ENCODE measurements at regions of chr18 and their contacts with region 1.

Region 1: DNA sequence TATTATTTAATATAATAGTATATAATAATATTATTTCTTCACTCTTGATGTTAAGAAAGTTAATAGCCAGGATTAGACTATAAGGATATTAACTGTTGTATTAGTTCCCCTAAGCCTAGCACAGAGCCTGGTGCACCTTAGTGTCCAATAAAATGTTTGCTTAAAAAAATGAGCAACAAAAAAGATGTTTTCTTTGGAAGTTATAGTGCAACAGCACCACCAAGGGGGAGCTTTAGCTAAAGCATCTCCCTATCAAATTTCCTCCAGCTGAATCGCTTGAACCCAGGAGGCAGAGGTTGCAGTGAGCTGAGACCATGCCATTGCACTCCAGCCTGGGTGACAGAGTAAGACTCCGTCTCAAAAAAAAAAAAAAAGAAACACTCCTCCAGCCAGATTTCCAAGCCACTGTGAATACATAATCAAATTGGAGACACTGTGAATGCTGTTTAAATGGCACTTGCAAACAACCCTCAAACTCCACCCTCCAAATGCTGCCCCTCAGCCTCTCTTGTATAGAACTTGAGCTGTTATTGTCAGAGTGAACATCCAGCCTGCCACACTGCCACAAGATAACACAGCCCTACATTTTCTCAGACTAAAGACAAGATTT is 221.9 kb downstream of the DYM start:
- DNase-seq: peak; percentile 53
- H3K4me3 ChIP-seq: no peak overlapping the region
- H3K27ac ChIP-seq: no peak overlapping the region
- H3K4me1 ChIP-seq: peaks cover 3% of the 10 kb centered on the region
- H3K27me3 ChIP-seq: no peaks in the 10 kb centered on the region
- CTCF ChIP-seq: peak; percentile 42 to 48
- POLR2A ChIP-seq: no peak

Region 2: DNA sequence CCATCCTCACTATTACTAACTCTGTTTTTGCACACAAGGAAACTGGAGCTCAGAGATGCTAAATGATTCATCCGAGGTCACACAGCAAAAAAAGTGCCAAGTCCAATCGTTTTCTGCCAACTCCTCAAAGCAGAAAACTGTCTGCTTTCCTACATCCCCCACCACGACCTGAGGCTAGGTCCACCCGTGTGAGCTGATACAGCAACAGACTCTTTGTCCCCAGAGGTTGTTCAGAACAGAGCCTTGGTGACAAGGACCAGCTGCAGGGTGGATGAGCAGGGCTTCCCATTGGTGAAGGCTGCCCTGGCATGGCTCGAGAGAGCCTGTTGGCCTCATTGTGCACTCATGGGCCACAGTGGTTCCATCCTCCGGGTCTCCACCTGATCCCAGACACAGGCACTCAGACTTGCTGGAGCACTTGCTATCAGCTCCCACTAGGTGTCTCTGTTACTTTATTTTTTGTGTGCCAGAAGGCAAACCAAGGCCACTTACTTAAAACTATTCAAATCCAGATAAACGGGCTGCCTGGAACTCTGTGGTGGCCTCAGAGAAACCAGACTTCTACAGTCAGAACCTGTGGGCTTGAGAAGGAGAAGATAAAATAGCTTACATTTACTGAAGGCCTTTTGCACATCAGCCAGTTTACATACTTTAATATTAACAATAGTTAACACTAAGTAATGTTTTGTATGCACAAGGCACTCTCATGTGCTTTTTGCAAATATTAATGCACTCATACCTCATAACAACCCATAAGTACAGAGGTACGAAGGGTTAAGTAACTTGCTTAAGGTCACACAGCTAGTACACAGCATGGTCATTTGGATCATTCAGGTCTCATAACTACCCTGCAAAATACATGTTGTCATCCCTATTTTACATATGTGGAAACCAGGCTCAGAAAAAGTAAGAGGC is 762.6 kb before region 1 on chr18:
- CTCF ChIA-PET with region 1: interaction called, 11 read pairs
- POLR2A ChIA-PET with region 1: no interaction called
- dilution Hi-C with region 1: no loop called
- intact Hi-C with region 1: loop called (anchors 10 kb)
- DNase-seq: peak; percentile 78
- H3K4me3 ChIP-seq: no peak overlapping the region
- H3K27ac ChIP-seq: no peak overlapping the region
- H3K4me1 ChIP-seq: peaks cover 2% of the 10 kb centered on the region
- H3K27me3 ChIP-seq: peaks cover 6 to 11% of the 10 kb centered on the region in 2 experiments
- CTCF ChIP-seq: peak; percentile 80 to 86
- POLR2A ChIP-seq: no peak

Region 3: DNA sequence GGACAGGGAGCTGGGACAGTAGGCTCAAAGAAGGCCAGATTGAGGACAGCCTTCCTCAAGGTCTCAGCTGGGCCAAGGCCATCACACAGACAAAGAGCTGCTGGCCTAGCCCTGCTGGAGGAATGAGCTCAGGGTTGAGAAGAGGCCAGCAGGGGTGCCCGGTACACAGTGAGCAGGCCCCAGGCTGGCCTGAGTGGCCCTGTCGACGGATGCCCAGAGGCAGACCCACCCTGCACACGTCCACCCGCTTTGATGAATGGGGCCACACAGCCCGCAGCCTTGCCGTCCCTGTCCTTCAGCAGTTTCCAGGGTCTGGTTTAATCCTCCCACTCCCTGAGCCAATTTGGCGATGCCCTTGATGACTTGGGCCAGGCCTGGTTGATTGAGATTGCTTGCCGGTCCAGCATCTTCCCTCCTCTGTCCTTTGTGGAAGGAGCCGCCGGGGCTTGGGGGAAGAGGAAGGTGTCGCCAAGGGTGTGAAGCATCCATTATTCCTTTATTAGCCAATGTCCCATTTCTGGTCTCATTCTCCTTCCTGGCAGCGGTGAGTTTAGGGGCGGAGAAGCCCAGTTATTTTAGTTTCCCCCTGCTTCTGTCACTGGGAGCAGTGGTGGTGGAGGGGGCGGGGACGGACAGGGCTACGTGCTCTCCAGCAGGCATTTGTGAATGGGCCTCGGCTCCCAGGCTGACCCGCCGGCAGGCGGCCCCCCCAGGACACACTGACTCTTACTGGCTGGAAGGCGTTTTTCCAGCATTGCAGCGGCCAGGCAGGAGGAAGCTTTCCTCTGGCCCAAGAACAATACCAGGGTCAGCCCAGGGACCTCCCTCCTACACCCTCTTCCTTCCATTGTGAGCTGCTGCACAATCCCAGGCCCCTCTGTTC is 558.0 kb before region 1 on chr18:
- CTCF ChIA-PET with region 1: interaction called, 56 read pairs
- POLR2A ChIA-PET with region 1: interaction called, 3 read pairs
- dilution Hi-C with region 1: no loop called
- intact Hi-C with region 1: loop called (anchors 1 kb)
- DNase-seq: peak; percentile 96
- H3K4me3 ChIP-seq: no peak overlapping the region
- H3K27ac ChIP-seq: peak overlapping the region; percentile 42
- H3K4me1 ChIP-seq: peaks cover 17% of the 10 kb centered on the region
- H3K27me3 ChIP-seq: no peaks in the 10 kb centered on the region
- CTCF ChIP-seq: peak; percentile 26 to 67
- POLR2A ChIP-seq: no peak

Region 4: GRCh38 chr18:49021433-49022129 is 217.0 kb before region 1 on chr18:
- CTCF ChIA-PET with region 1: interaction called, 16 read pairs
- POLR2A ChIA-PET with region 1: no interaction called
- dilution Hi-C with region 1: no loop called
- intact Hi-C with region 1: loop called (anchors 5 kb)
- DNase-seq: peak; percentile 19
- H3K4me3 ChIP-seq: no peak overlapping the region
- H3K27ac ChIP-seq: no peak overlapping the region
- H3K4me1 ChIP-seq: no peaks in the 10 kb centered on the region
- H3K27me3 ChIP-seq: no peaks in the 10 kb centered on the region
- CTCF ChIP-seq: peak; percentile 46 to 60
- POLR2A ChIP-seq: no peak

Region 5: DNA sequence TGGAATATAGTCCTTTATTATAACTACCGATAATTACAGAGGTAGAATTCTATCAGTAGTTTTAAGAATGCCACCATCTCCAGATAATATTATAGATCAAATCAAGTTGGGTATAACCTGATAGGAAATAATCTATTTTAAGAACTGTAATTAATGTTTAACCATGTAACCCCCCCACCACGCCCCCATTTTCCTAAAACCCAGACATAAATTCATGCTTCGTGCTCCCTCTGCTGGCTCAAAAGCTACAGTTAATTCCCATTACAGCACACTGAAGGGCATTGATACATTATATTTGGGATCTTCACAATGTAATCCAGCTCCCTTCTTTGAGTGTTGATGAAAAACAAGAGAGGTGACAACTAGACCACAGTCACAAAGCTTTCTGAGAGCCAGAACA is 59.8 kb before region 1 on chr18:
- CTCF ChIA-PET with region 1: interaction called, 30 read pairs
- POLR2A ChIA-PET with region 1: no interaction called
- dilution Hi-C with region 1: no loop called
- intact Hi-C with region 1: loop called (anchors 10 kb)
- DNase-seq: peak; percentile 37
- H3K4me3 ChIP-seq: no peak overlapping the region
- H3K27ac ChIP-seq: no peak overlapping the region
- H3K4me1 ChIP-seq: peaks cover 18% of the 10 kb centered on the region
- H3K27me3 ChIP-seq: no peaks in the 10 kb centered on the region
- CTCF ChIP-seq: peak; percentile 44 to 48
- POLR2A ChIP-seq: no peak

Region 6: GRCh38 chr18:49227441-49228165 is 10.9 kb before region 1 on chr18:
- CTCF ChIA-PET with region 1: interaction called, 12 read pairs
- POLR2A ChIA-PET with region 1: no interaction called
- dilution Hi-C with region 1: no loop called
- intact Hi-C with region 1: no loop called
- DNase-seq: peak; percentile 19
- H3K4me3 ChIP-seq: no peak overlapping the region
- H3K27ac ChIP-seq: no peak overlapping the region
- H3K4me1 ChIP-seq: peaks cover 6% of the 10 kb centered on the region
- H3K27me3 ChIP-seq: no peaks in the 10 kb centered on the region
- CTCF ChIP-seq: no peak
- POLR2A ChIP-seq: no peak

Region 7: GRCh38 chr18:49412679-49413078 is 174.1 kb after region 1 on chr18:
- CTCF ChIA-PET with region 1: interaction called, 28 read pairs
- POLR2A ChIA-PET with region 1: interaction called, 5 read pairs
- dilution Hi-C with region 1: no loop called
- intact Hi-C with region 1: no loop called
- DNase-seq: peak; percentile 35
- H3K4me3 ChIP-seq: no peak overlapping the region
- H3K27ac ChIP-seq: peak overlapping the region; percentile 56
- H3K4me1 ChIP-seq: peaks cover 18% of the 10 kb centered on the region
- H3K27me3 ChIP-seq: no peaks in the 10 kb centered on the region
- CTCF ChIP-seq: no peak
- POLR2A ChIP-seq: no peak

Measured in endothelial cell of umbilical vein (primary cell).